Panc1 (cell line): ENCODE measurements at regions of chr7 and their contacts with region 1.

Region 1: DNA sequence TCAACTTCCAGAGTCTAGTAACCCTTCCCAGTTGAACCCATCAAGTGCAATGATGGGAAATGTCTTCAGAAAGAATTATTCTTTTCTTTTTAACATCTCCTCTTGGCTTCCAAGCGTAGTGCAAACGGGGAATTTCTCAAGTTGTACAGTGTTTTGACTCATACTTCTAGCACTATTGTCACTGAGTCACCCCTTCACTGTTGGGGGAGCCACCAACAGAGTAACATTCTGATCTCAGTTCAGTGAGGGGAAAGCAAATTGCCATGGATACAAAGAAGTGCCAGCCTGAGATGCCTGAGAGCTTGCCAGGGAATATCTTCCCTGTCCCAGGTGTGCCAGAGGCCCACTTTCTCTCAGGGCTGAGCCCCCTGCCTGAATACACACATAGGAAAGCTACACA is 31.0 kb downstream of the CYP3A5 start:
- DNase-seq: no peak
- ATAC-seq: no peak
- H3K4me3 ChIP-seq: no peak overlapping the region
- H3K27ac ChIP-seq: no peak overlapping the region
- H3K4me1 ChIP-seq: no peaks in the 10 kb centered on the region
- H3K27me3 ChIP-seq: no peaks in the 10 kb centered on the region
- CTCF ChIP-seq: no peak

Region 2: GRCh38 chr7:99631295-99632109 is 17.3 kb before region 1 on chr7:
- CTCF ChIA-PET with region 1: no interaction called
- POLR2A ChIA-PET with region 1: no interaction called
- in situ Hi-C with region 1: no loop called
- intact Hi-C with region 1: no loop called
- DNase-seq: no peak
- ATAC-seq: peak; percentile 72
- H3K4me3 ChIP-seq: no peak overlapping the region
- H3K27ac ChIP-seq: no peak overlapping the region
- H3K4me1 ChIP-seq: no peaks in the 10 kb centered on the region
- H3K27me3 ChIP-seq: no peaks in the 10 kb centered on the region
- CTCF ChIP-seq: no peak; the same call in 1 of the 2 replicates

Region 3: GRCh38 chr7:99733448-99733847 is 84.6 kb after region 1 on chr7:
- CTCF ChIA-PET with region 1: no interaction called
- POLR2A ChIA-PET with region 1: no interaction called
- in situ Hi-C with region 1: no loop called
- intact Hi-C with region 1: no loop called
- DNase-seq: no peak
- ATAC-seq: no peak; the same call in 1 of the 2 replicates
- H3K4me3 ChIP-seq: no peak overlapping the region
- H3K27ac ChIP-seq: no peak overlapping the region
- H3K4me1 ChIP-seq: no peaks in the 10 kb centered on the region
- H3K27me3 ChIP-seq: peaks cover 3% of the 10 kb centered on the region
- CTCF ChIP-seq: peak; percentile 42

Region 4: GRCh38 chr7:99856903-99857302 is 208.1 kb after region 1 on chr7:
- CTCF ChIA-PET with region 1: no interaction called
- POLR2A ChIA-PET with region 1: no interaction called
- in situ Hi-C with region 1: no loop called
- intact Hi-C with region 1: loop called (anchors 5 kb)
- DNase-seq: no peak
- ATAC-seq: no peak
- H3K4me3 ChIP-seq: no peak overlapping the region
- H3K27ac ChIP-seq: no peak overlapping the region
- H3K4me1 ChIP-seq: no peaks in the 10 kb centered on the region
- H3K27me3 ChIP-seq: peaks cover 6% of the 10 kb centered on the region; the same call in 1 of the 2 replicates
- CTCF ChIP-seq: no peak

Region 5: GRCh38 chr7:100563809-100564400 is 915.1 kb after region 1 on chr7:
- CTCF ChIA-PET with region 1: no interaction called
- POLR2A ChIA-PET with region 1: no interaction called
- in situ Hi-C with region 1: no loop called
- intact Hi-C with region 1: no loop called
- DNase-seq: peak; percentile 53
- ATAC-seq: peak; percentile 71
- H3K4me3 ChIP-seq: no peak overlapping the region
- H3K27ac ChIP-seq: 0 out of 2 replicates have a peak overlapping the region, but pooled peaks have one; percentile 17
- H3K4me1 ChIP-seq: peaks cover 23% of the 10 kb centered on the region
- H3K27me3 ChIP-seq: no peaks in the 10 kb centered on the region
- CTCF ChIP-seq: peak; percentile 97